Natural killer cell (primary cell): ENCODE measurements at regions of chr7 and their contacts with region 1.

Region 1: DNA sequence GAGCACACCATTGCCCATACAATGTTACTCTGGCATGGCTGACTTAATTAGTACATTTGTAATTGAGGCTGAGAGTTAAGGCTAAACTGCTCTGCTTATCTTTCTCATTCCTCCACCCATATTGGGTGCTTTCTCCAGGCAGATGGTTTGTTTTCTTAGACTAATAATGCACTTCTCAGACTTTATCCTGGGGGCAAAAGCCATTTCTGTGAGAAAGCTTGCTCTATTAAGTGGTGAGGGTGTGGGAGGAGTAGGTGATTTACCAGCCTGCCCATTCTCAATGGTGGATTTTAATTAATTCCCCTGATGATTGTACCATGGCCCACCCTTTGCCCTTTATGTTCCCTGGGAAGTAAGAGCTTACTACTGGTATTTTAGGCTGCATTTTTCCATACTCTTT is 174.8 kb downstream of the FOXP2 start:
- DNase-seq: no peak
- ATAC-seq: no peak
- H3K4me3 ChIP-seq: no peak overlapping the region
- H3K4me3 Mint-ChIP-seq: no peak overlapping the region
- H3K27ac ChIP-seq: no peak overlapping the region
- H3K27ac Mint-ChIP-seq: no peak overlapping the region
- H3K4me1 ChIP-seq: no peaks in the 10 kb centered on the region
- H3K4me1 Mint-ChIP-seq: no peaks in the 10 kb centered on the region
- H3K27me3 ChIP-seq: no peaks in the 10 kb centered on the region
- H3K27me3 Mint-ChIP-seq: no peaks in the 10 kb centered on the region
- CTCF ChIP-seq: no peak

Region 2: DNA sequence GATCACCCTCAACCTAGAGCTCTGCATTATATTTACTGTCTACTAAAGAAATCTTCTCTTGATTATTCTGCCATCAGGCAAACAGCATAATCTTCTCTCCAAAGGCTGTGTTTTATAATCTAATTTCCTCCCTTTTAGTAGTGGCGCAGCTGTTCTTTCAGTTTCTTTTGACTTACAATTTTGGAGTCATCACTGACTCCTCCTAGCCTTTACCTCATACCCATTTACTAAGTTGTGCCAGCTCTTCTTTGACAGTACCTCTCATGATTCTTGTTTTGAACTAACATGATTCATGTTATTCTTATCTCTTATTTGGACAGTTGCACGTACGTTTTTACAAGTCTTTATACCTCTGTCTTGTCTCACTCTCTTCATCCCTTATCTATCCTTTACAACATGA is 61.8 kb before region 1 on chr7:
- intact Hi-C with region 1: loop called (anchors 10 kb)
- DNase-seq: no peak
- ATAC-seq: no peak
- H3K4me3 ChIP-seq: no peak overlapping the region
- H3K4me3 Mint-ChIP-seq: no peak overlapping the region
- H3K27ac ChIP-seq: no peak overlapping the region
- H3K27ac Mint-ChIP-seq: no peak overlapping the region
- H3K4me1 ChIP-seq: no peaks in the 10 kb centered on the region
- H3K4me1 Mint-ChIP-seq: no peaks in the 10 kb centered on the region
- H3K27me3 ChIP-seq: no peaks in the 10 kb centered on the region
- H3K27me3 Mint-ChIP-seq: no peaks in the 10 kb centered on the region
- CTCF ChIP-seq: no peak